ENCODE measurements at regions of chr5 and their contacts with region 1.

Region 1: DNA sequence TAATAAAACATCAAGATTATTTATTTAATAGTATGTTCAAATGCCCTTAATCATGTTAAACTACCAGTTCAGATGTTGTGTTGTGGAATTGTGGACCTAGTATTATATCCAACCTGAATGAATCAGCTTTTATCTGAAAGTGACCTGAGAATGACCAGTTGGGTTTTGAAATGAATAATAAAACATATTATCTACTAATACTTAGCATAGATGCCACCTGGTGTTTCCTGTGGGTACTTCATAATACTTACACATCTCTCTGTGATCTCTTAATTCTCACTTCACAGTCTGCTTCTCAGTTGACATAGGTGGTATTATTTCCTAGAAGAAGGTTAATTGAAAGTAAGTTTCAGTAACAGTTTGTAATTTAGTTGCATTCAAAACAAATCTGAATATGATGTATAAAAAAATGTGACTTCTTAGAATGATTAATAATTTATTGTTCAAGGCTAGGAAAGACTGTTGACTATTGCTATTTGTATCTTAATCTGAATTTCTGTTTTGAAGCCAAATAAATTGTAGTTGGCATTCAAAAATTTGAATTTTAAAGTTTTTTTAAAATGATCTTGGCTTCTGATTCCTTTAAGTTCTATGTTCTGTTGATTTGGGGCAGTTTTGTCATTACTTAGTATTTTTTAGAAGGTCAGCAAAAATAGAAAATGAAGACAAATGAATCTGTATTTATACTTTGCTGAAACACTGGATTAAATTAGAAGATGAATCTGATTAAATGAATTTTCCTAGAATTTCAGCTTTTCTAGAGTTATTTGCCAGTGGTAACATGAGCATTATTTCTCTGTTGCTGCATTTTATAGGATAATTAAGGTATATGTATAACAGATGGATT is 48.2 kb downstream of the KIF2A start:
- DNase-seq: no peak
- ATAC-seq: peak; percentile 76 to 90 (median 80)
- H3K4me3 ChIP-seq: no peak overlapping the region
- H3K27ac ChIP-seq: no peak overlapping the region
- H3K4me1 ChIP-seq: no peaks in the 10 kb centered on the region
- H3K27me3 ChIP-seq: no peaks in the 10 kb centered on the region
- CTCF ChIP-seq: peak; percentile 58 to 71 (median 62)
- POLR2A ChIP-seq: no peak

Region 2: GRCh38 chr5:62231576-62231975 is 122.7 kb before region 1 on chr5:
- intact Hi-C with region 1: loop called in 1 of 2 experiments (anchors 10 kb)
- DNase-seq: no peak
- ATAC-seq: no peak
- H3K4me3 ChIP-seq: no peak overlapping the region
- H3K27ac ChIP-seq: no peak overlapping the region
- H3K4me1 ChIP-seq: no peaks in the 10 kb centered on the region
- H3K27me3 ChIP-seq: no peaks in the 10 kb centered on the region
- CTCF ChIP-seq: no peak
- POLR2A ChIP-seq: no peak